PC-9 (cell line): ENCODE measurements at regions of chr5 and their contacts with region 1.

Region 1: GRCh38 chr5:50406874-50407273 is 34.2 kb downstream of the EMB start:
- DNase-seq: no peak
- H3K4me3 ChIP-seq: no peak overlapping the region
- H3K27ac ChIP-seq: no peak overlapping the region
- H3K4me1 ChIP-seq: no peaks in the 10 kb centered on the region
- H3K27me3 ChIP-seq: no peaks in the 10 kb centered on the region
- CTCF ChIP-seq: no peak

Region 2: GRCh38 chr5:50463047-50463446 is 56.2 kb after region 1 on chr5:
- CTCF ChIA-PET with region 1: no interaction called
- POLR2A ChIA-PET with region 1: no interaction called
- intact Hi-C with region 1: no loop called
- DNase-seq: no peak
- H3K4me3 ChIP-seq: no peak overlapping the region
- H3K27ac ChIP-seq: no peak overlapping the region
- H3K4me1 ChIP-seq: no peaks in the 10 kb centered on the region
- H3K27me3 ChIP-seq: no peaks in the 10 kb centered on the region
- CTCF ChIP-seq: no peak

Region 3: GRCh38 chr5:50476549-50476948 is 69.7 kb after region 1 on chr5:
- CTCF ChIA-PET with region 1: no interaction called
- POLR2A ChIA-PET with region 1: interaction called, 10 read pairs
- intact Hi-C with region 1: no loop called
- DNase-seq: no peak
- H3K4me3 ChIP-seq: no peak overlapping the region
- H3K27ac ChIP-seq: no peak overlapping the region
- H3K4me1 ChIP-seq: no peaks in the 10 kb centered on the region
- H3K27me3 ChIP-seq: no peaks in the 10 kb centered on the region
- CTCF ChIP-seq: no peak